ENCODE measurements at regions of chr3 and their contacts with region 1.

Region 1: DNA sequence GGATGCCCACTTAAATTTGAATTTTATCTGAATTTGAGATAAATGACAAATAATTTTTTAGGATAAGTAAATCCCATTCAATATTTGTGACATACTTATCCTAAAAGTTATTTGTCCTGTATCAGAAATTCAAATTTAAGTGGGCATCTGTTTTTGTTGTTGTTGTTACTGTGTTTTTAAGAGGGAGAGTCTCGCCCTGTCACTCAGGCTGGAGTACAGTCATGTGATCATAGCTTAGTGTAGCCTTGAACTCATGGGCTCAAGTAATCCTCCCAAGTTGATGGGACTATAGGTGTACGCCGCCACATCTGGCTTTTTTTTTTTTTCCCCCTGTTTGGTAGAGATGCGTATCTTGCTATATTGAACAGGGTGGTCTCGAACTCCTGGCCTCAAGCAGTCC is 283.0 kb downstream of the PTPRG start:
- DNase-seq: no peak
- ATAC-seq: no peak
- H3K4me3 ChIP-seq: no peak overlapping the region
- H3K27ac ChIP-seq: no peak overlapping the region
- H3K4me1 ChIP-seq: peaks cover 17% of the 10 kb centered on the region
- H3K27me3 ChIP-seq: no peaks in the 10 kb centered on the region
- CTCF ChIP-seq: no peak
- POLR2A ChIP-seq: no peak
- RAD21 ChIP-seq: no peak

Region 2: GRCh38 chr3:61645148-61645547 is 199.2 kb before region 1 on chr3:
- CTCF ChIA-PET with region 1: interaction called, 11 read pairs
- POLR2A ChIA-PET with region 1: no interaction called
- dilution Hi-C with region 1: no loop called
- in situ Hi-C with region 1: no loop called
- intact Hi-C with region 1: no loop called
- DNase-seq: no peak
- ATAC-seq: no peak
- H3K4me3 ChIP-seq: no peak overlapping the region
- H3K27ac ChIP-seq: no peak overlapping the region
- H3K4me1 ChIP-seq: peaks cover 7% of the 10 kb centered on the region
- H3K27me3 ChIP-seq: no peaks in the 10 kb centered on the region
- CTCF ChIP-seq: no peak
- POLR2A ChIP-seq: no peak
- RAD21 ChIP-seq: no peak